ENCODE measurements at regions of chr6 and their contacts with region 1.

Region 1: GRCh38 chr6:146543211-146543939 is at the start of gene RAB32:
- H3K4me3 Mint-ChIP-seq: peak within 1 kb of the TSS; percentile 95
- H3K27ac Mint-ChIP-seq: peak within 1 kb of the TSS; percentile 94
- H3K4me1 Mint-ChIP-seq: peaks cover 30% of the 10 kb centered on the region
- H3K27me3 Mint-ChIP-seq: no peaks in the 10 kb centered on the region

Region 2: DNA sequence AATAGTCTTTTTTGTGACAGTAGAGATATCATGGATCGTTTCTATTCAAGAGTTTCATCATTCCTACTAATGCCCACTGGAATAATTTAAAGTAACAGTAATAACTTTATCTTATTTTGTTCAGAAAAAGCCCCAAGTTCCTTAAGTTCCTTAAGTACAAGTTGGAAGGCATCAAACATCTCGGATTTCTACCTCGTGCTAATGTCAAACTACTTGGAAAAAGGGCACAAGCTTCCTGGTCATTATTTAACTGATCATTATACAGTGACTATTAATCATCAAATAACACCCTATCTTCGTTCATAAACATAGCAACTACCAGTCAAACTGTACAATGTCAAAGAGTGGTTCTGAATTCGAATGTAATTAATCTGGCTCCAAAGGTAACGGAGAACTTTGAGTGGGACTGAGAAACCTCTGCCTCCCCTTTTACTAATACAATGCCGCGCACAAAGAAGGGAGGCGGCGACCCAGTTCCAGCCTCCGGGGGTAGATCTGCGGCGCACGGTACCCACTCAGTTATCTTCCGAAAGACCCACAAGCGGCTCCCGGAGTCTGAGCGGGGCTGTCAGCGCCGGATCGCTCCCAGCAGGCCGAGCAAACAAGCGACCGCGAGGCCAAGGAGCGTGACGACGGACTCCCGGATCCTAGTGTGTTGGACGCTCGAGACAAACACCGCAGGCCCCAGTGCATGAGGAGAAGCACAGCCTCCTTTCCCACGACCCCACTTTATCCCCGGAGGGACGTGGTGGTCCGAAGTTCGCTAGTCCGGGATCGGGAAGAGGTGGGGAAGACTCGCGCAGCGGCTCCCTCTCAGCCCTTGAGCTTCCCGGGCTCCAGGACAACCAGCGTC is 579.9 kb before region 1 on chr6:
- intact Hi-C with region 1: loop called (anchors 2 kb)
- H3K4me3 Mint-ChIP-seq: peak overlapping the region; percentile 92
- H3K27ac Mint-ChIP-seq: peak overlapping the region; percentile 94
- H3K4me1 Mint-ChIP-seq: peaks cover 20% of the 10 kb centered on the region
- H3K27me3 Mint-ChIP-seq: no peaks in the 10 kb centered on the region

Region 3: GRCh38 chr6:146357578-146358430 is 185.6 kb before region 1 on chr6:
- intact Hi-C with region 1: loop called (anchors 5 kb)
- H3K4me3 Mint-ChIP-seq: peak overlapping the region; percentile 65
- H3K27ac Mint-ChIP-seq: peak overlapping the region; percentile 90
- H3K4me1 Mint-ChIP-seq: peaks cover 60% of the 10 kb centered on the region
- H3K27me3 Mint-ChIP-seq: no peaks in the 10 kb centered on the region

Region 4: DNA sequence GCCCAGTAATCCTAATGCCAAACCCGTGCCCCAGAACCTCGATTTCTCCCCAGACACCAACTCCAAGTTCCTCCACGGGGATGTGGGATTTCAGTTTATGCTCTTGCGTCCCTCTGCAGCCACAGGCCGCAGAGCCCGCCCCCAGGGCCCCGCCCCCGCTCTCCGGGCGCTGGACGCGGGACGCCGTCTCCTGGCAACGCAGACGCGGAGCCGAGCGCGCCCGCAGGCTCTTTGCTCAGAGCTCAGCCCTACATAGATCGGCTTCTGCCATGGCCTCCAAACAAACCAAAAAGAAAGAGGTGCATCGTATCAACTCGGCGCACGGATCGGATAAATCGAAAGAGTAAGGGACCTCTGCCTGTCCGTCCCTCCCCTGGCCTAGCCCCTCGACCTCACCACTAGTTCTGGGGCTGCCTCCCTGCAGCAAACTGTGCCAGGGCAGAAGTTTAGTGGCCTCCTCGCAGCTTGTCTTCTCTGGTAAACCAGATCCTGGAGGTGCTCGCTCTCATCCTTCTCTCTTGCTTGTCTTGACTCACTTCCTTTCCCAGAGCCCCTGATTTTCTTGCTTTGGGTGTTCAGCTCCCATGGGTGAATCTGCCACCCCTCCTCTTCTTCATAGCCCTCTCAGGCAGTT is 55.5 kb after region 1 on chr6 and contains the start of gene ADGB:
- intact Hi-C with region 1: loop called (anchors 5 kb)
- H3K4me3 Mint-ChIP-seq: peak within 1 kb of the TSS; percentile 87
- H3K27ac Mint-ChIP-seq: peak within 1 kb of the TSS; percentile 80
- H3K4me1 Mint-ChIP-seq: peaks cover 43% of the 10 kb centered on the region
- H3K27me3 Mint-ChIP-seq: no peaks in the 10 kb centered on the region

Region 5: DNA sequence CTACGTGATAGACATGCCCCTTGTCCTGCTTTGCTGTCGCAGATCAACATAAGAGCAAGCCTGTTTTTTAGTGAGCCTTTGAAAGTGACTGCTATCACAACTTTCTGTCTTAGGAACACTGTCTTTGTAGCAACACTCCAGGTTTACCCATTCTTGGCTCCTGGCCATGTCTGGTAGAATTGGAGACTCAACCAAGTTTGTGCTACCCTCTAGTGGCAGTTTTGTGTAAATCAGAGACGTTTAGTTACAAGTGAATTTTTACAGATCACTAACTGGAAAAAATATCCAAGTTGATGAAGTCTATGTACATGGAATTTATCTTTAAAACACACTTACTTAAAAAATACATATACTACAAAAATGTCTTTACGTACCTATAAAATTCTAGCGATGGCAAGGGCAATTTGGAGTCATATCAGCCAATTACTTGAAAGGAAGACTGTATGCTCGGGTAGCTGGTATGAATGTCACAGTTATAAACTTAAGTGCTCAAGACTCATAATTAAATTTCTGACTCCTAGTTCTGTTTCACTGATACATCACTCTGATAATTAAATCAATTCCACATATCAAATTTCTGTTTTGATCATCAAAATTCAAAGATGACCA is 156.8 kb after region 1 on chr6:
- intact Hi-C with region 1: loop called (anchors 1 kb)
- H3K4me3 Mint-ChIP-seq: no peak overlapping the region
- H3K27ac Mint-ChIP-seq: no peak overlapping the region
- H3K4me1 Mint-ChIP-seq: no peaks in the 10 kb centered on the region
- H3K27me3 Mint-ChIP-seq: no peaks in the 10 kb centered on the region

Measured in dendritic cell treated with granulocyte-macrophage colony-stimulating factor and Interleukin-4, amounts not matched to agents 40 ng/mL and 50 ng/mL, for 4 days (primary cell).